ENCODE measurements at regions of chr14 and their contacts with region 1.

Region 1: DNA sequence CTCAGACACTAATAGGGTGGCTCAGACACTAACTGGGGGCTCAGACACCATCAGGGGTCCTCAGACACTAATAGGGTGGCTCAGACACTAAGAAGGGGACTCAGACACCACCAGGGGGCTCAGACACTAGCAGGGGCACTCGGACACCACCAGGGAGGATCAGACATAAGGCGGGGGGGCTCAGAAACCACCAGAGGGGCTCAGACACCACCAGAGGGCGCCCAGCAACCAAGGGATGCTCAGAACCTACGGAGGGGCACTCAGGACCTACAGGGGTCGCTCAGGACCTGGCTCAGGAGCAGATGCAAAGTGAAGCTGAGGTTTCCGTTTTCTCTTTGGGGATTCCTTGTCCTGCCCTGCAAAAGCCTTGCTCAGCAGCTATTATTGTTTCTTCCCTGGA is 448.5 kb downstream of the TMEM121 start:
- DNase-seq: peak; percentile 93 to 95 (median 94)
- H3K4me3 ChIP-seq: no peak overlapping the region
- H3K27ac ChIP-seq: no peak overlapping the region
- H3K4me1 ChIP-seq: peaks cover 0 to 14% (median 3%) of the 10 kb centered on the region in 4 experiments
- H3K27me3 ChIP-seq: no peaks in the 10 kb centered on the region

Region 2: DNA sequence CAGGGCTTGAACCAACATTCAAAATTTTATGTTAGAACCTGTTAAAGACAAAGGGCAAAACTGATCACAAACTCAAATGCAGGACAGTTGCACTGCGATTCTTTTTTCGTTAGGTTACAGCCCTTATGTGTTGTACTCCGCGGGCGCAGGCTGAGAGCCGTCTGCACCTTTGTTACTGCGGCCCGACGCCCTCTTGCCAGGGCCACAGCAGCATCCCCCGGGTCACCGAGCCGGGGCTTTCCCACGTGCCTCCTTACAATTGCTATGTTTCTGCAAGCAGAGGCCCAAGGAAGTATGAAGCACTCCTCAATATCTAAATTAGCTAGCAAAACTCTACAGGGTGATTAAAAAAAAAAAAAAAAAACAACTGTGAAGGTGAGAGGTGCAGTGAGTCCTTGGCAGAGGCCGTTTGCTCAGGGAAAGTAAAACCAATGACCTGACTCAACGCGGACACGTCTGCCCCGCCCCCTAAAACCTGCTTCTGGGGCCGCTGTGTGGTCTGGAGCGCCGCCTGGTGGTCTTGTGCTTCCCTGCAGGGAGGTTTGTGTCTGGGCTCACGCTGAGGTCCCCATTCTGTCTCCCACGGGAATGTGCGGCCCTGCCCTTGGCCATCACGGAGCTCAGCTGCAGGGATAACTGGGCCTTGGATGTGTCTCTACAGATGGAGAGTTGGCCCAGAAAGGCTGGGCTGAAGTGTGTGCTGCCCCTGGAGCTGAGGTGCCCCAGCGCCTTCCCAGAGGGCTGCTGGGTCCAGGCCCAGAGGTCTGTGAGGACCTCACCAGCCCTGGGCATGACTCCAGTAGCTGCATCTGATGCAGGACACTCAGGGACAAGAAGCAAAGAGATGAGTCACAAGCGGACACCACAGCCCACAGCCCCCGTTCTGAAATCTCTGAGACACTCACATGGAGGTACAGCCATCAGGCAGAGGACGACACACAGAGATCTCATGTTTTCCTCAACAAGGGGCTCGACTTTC is 30.0 kb before region 1 on chr14:
- CTCF ChIA-PET with region 1: interaction called, 10 read pairs
- POLR2A ChIA-PET with region 1: no interaction called
- DNase-seq: peak; percentile 78 to 83 (median 79)
- H3K4me3 ChIP-seq: peak overlapping the region in 1 of 7 experiments; percentile 5
- H3K27ac ChIP-seq: no peak overlapping the region
- H3K4me1 ChIP-seq: peaks cover 0 to 18% (median 13%) of the 10 kb centered on the region in 4 experiments
- H3K27me3 ChIP-seq: no peaks in the 10 kb centered on the region

Region 3: GRCh38 chr14:105962532-105962931 is 12.4 kb before region 1 on chr14:
- CTCF ChIA-PET with region 1: interaction called, 11 read pairs
- POLR2A ChIA-PET with region 1: no interaction called
- DNase-seq: no peak
- H3K4me3 ChIP-seq: no peak overlapping the region
- H3K27ac ChIP-seq: no peak overlapping the region
- H3K4me1 ChIP-seq: peaks cover 0 to 2% (median under 1%) of the 10 kb centered on the region in 4 experiments
- H3K27me3 ChIP-seq: no peaks in the 10 kb centered on the region

Region 4: GRCh38 chr14:105999361-106000028 is 24.6 kb after region 1 on chr14:
- CTCF ChIA-PET with region 1: interaction called, 20 read pairs
- POLR2A ChIA-PET with region 1: no interaction called
- DNase-seq: peak; percentile 92 to 94 (median 92)
- H3K4me3 ChIP-seq: no peak overlapping the region
- H3K27ac ChIP-seq: no peak overlapping the region
- H3K4me1 ChIP-seq: peaks cover 7 to 35% (median 22%) of the 10 kb centered on the region in 4 experiments
- H3K27me3 ChIP-seq: no peaks in the 10 kb centered on the region

Region 5: DNA sequence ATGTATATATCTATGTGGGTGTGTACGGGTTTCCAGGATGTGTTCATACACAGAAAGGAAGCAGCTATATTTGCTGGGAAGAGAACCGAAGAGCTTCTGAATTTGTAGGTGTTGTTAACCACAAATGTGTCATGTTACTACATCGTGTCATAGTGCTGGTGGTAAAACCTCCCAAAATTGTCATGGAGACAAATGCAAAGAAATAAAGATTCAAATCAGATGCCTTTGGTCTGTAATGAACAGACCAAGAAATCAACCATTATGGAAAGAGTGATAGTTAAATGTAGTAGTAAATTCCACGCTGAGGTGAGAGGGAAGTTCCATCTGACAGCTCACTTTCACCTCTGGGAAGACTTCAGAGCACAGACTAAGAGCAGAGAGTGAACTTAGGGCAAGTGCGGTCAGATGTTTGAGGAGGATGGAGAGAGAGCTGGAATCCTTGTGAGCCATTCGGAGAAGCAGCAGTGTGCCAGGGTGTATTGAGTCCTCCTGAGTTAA is 39.0 kb after region 1 on chr14:
- CTCF ChIA-PET with region 1: interaction called, 14 read pairs
- POLR2A ChIA-PET with region 1: no interaction called
- DNase-seq: peak in 2 of 3 donors; percentile 29 to 45
- H3K4me3 ChIP-seq: no peak overlapping the region
- H3K27ac ChIP-seq: no peak overlapping the region
- H3K4me1 ChIP-seq: peaks cover 0 to 12% (median 4%) of the 10 kb centered on the region in 4 experiments
- H3K27me3 ChIP-seq: peaks cover 0 to 3% (median 0%) of the 10 kb centered on the region in 5 experiments

Region 6: DNA sequence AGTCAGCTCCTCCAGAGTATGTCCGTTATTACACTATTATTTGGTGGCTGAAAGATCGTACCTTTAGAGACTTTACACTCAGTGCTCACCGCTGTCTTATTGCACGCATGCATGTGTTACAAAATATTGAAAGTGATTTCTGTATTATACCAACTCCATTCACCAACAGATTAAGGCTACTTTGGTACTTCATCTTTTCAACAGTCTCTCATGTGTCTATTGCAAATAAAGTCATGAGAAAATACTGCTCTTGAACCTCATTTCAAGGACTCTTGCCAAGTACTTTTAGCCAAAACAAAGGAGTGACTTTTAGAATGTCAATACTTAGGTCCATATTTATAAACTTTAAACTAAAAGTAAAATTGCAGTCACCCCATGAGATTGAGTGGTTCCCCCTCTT is 55.1 kb after region 1 on chr14:
- CTCF ChIA-PET with region 1: no interaction called
- POLR2A ChIA-PET with region 1: no interaction called
- DNase-seq: no peak
- H3K4me3 ChIP-seq: no peak overlapping the region
- H3K27ac ChIP-seq: no peak overlapping the region
- H3K4me1 ChIP-seq: no peaks in the 10 kb centered on the region
- H3K27me3 ChIP-seq: peaks cover 0 to 3% (median 2%) of the 10 kb centered on the region in 5 experiments

Region 7: GRCh38 chr14:106163306-106163705 is 188.4 kb after region 1 on chr14:
- CTCF ChIA-PET with region 1: no interaction called
- POLR2A ChIA-PET with region 1: no interaction called
- DNase-seq: no peak
- H3K4me3 ChIP-seq: no peak overlapping the region
- H3K27ac ChIP-seq: no peak overlapping the region
- H3K4me1 ChIP-seq: no peaks in the 10 kb centered on the region
- H3K27me3 ChIP-seq: peaks cover 0 to 21% (median 3%) of the 10 kb centered on the region in 5 experiments

Measured in common myeloid progenitor, CD34-positive (primary cell).